Activated CD4-positive, alpha-beta memory T cell treated with anti-CD3 and anti-CD28 coated beads for 36 hours (primary cell): ENCODE measurements at regions of chr9 and their contacts with region 1.

Region 1: DNA sequence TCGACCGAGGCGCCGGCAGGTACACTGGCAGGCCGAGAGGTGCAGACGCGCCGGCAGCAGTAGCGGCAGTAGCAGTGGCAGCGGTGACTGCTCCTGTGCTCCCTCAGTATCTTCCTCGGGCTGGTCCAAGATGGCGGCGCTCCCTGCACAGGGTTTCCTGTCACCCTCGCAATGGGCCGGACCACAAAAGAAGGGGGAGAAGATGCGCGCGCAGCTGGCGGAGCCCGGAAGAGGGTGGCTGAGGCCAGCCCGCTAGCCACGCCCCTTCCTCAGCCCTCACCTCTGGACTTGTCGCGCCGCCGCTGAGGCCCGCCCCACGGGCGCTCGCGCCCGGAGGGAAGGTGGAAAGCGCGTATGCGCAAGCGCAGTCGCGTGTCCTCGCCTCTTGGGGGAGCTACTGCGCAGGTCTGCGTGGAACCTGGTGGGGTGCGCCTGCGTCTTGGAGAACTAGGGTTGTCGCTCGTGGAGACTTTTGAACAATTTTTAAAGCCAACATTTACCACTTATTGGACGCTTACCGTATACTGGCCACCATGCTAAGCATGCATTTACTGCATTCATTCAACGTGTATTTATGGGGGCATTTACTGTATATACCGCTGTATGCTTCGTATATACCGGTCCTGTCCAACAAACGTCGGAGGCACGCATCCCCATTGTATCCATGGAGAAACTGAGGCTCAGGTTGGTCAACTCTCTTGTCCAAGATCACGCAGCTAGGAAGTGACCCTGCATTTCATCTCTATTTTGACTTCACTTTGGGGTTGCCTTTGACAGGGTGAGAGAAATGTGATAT is at the start of gene RAB14:
- DNase-seq: peak; percentile 100
- H3K4me3 Mint-ChIP-seq: peak within 1 kb of the TSS; percentile 90
- H3K27ac Mint-ChIP-seq: peak within 1 kb of the TSS; percentile 95
- H3K4me1 Mint-ChIP-seq: peaks cover 39% of the 10 kb centered on the region
- H3K27me3 Mint-ChIP-seq: no peaks in the 10 kb centered on the region
- total RNA-seq, gene RAB14: 58.2 to 58.5 TPM

Region 2: GRCh38 chr9:120689860-120690259 is 512.1 kb before region 1 on chr9:
- CTCF ChIA-PET with region 1: no interaction called
- POLR2A ChIA-PET with region 1: no interaction called
- intact Hi-C with region 1: no loop called
- DNase-seq: no peak
- H3K4me3 Mint-ChIP-seq: no peak overlapping the region
- H3K27ac Mint-ChIP-seq: no peak overlapping the region
- H3K4me1 Mint-ChIP-seq: peaks cover 24% of the 10 kb centered on the region
- H3K27me3 Mint-ChIP-seq: no peaks in the 10 kb centered on the region

Region 3: DNA sequence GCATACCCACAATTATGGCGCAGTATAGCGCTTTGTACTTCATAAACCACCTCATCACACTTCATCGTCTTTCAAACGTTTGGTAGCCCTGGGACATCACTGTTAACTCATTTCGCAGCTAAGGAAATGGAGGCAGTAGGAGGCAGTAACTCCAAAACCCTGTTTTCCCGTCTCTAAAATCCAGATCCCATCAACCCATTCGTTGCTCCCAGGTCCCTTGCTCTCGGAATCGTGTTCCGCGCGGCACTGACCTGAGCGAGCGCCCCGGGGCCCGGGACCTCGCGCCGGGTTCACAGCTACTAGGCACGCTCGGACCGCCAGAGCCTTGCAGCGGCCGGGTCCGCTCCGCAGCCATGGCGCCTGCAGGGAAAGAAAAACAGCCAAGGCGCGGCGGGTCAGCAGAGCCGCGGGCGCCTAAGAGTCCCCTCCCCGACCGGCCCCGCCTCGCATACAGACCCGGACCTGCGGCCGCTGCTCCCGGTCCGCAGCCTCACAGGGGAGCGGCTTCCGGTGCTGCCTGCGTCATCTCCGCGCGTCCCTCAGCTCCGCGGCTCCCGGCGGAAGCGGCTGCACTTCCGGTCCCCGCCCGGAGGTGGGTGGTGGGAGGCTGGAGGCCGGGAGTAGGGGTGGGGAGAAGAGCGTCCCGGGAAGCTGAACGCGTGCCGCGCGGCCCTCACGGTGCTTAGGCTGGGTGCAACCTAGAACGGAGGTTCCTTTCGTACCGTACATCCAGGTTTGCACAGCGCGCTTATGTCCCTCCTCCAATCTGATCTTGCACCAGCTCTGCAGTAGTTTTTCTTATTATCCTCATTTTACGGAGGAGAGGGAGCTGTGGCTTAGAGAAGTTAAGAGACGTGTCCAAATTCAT is 408.8 kb before region 1 on chr9 and contains the start of gene FBXW2:
- CTCF ChIA-PET with region 1: no interaction called
- POLR2A ChIA-PET with region 1: interaction called, 4 read pairs
- intact Hi-C with region 1: loop called (anchors 5 kb)
- DNase-seq: peak; percentile 95
- H3K4me3 Mint-ChIP-seq: peak within 1 kb of the TSS; percentile 80
- H3K27ac Mint-ChIP-seq: peak within 1 kb of the TSS; percentile 93
- H3K4me1 Mint-ChIP-seq: peaks cover 42% of the 10 kb centered on the region
- H3K27me3 Mint-ChIP-seq: no peaks in the 10 kb centered on the region
- total RNA-seq, gene FBXW2: 70.2 to 72.5 TPM

Region 4: DNA sequence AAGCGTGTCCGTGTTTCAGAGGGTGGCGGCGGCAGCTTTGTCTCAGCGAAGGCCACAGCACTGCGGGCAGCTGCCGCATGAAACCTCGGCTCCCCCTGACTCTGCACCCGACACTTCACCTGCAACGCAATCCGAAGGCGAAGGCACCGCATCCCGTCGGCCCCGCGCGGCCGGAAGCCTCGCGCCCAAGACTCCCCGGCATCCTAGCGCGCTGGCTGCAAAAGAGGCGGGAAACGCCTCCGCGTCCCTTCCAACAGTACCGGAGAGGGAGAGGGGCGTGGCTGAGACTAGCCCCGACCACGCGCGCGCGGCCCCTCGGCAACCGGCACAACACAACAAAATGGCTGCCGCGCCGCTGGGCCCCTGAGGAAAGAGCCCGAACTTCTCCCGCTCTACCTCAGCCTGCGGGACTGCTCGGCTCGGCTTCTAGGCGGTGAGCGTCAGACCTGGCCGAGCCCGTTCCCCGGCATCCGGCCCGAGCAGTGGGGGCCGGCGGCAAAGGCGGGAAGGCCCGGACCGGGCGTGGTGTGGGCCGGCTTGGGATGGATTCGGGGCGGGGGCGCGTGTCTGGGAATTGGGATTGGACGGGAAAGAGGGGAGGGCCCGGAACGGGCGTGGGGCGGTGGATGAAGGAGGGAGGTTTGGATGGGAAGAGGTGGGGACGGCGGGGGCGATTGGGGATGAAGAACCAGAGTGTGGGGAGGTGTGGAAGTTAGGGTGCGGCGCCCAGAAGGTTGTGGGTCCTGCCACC is 127.1 kb before region 1 on chr9 and contains the start of gene CNTRL:
- CTCF ChIA-PET with region 1: interaction called, 4 read pairs
- POLR2A ChIA-PET with region 1: no interaction called
- intact Hi-C with region 1: loop called (anchors 5 kb)
- DNase-seq: peak; percentile 97
- H3K4me3 Mint-ChIP-seq: peak within 1 kb of the TSS; percentile 100
- H3K27ac Mint-ChIP-seq: peak within 1 kb of the TSS; percentile 85
- H3K4me1 Mint-ChIP-seq: peaks cover 46% of the 10 kb centered on the region
- H3K27me3 Mint-ChIP-seq: no peaks in the 10 kb centered on the region
- total RNA-seq, gene CNTRL: 60.0 to 65.1 TPM

Region 5: GRCh38 chr9:121185178-121185745 is 16.7 kb before region 1 on chr9:
- CTCF ChIA-PET with region 1: interaction called, 4 read pairs
- POLR2A ChIA-PET with region 1: interaction called, 10 read pairs
- intact Hi-C with region 1: loop called (anchors 1 kb)
- DNase-seq: no peak
- H3K4me3 Mint-ChIP-seq: no peak overlapping the region
- H3K27ac Mint-ChIP-seq: peak overlapping the region; percentile 83
- H3K4me1 Mint-ChIP-seq: peaks cover 59% of the 10 kb centered on the region
- H3K27me3 Mint-ChIP-seq: no peaks in the 10 kb centered on the region

Region 6: GRCh38 chr9:121369595-121370265 is 167.8 kb after region 1 on chr9 and contains the start of gene STOM:
- CTCF ChIA-PET with region 1: no interaction called
- POLR2A ChIA-PET with region 1: no interaction called
- intact Hi-C with region 1: loop called (anchors 5 kb)
- DNase-seq: peak; percentile 79
- H3K4me3 Mint-ChIP-seq: peak within 1 kb of the TSS; percentile 93
- H3K27ac Mint-ChIP-seq: peak within 1 kb of the TSS; percentile 99
- H3K4me1 Mint-ChIP-seq: peaks cover 58% of the 10 kb centered on the region
- H3K27me3 Mint-ChIP-seq: no peaks in the 10 kb centered on the region
- total RNA-seq, gene STOM: 49.8 to 51.9 TPM